Gastrocnemius medialis (tissue), 4 donors: ENCODE measurements at regions of chr1 and their contacts with region 1.

Region 1: GRCh38 chr1:109643385-109644230 is 12.3 kb upstream of the GSTM4 start:
- DNase-seq: peak; percentile 60 to 69
- ATAC-seq: peak; percentile 92 to 95
- H3K4me3 ChIP-seq: peak overlapping the region in 1 of 4 donors; percentile 14
- H3K27ac ChIP-seq: no peak overlapping the region
- H3K4me1 ChIP-seq: peaks cover 0 to 6% of the 10 kb centered on the region in 2 donors
- H3K27me3 ChIP-seq: no peaks in the 10 kb centered on the region
- CTCF ChIP-seq: peak; percentile 73 to 92 (median 85)
- POLR2A ChIP-seq: no peak

Region 2: DNA sequence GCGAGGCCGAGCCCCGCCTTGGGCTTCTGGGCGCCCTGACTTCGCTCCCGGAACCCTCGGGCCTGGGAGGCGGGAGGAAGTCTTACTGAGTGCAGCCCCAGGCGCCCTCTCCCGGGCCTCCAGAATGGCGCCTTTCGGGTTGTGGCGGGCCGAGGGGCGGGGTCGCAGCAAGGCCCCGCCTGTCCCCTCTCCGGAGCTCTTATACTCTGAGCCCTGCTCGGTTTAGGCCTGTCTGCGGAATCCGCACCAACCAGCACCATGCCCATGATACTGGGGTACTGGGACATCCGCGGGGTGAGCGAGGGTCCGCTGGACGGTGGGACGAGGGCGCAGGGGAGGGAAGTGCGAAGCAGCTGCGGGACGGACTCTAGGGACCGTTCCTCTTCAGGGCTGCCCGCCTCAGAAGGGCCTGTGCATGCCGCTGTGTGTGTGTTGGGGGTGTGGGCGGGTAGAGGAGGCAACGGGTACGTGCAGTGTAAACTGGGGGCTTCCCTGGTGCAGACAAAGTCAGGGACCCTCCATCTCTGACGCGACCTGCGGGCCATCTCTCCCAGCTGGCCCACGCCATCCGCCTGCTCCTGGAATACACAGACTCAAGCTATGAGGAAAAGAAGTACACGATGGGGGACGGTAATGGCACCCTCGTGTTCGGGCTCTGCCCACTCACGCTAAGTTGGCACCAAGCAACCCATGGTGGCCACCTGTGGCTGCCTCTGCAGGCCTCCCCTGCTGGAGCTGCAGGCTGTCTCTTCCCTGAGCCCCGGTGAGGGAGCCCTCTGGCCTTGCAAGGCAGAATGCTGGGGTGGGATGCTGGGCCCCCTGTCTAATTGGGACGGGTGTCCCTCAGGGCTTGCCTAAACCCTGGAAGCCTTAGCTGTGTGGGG is 44.2 kb after region 1 on chr1 and contains the start of gene GSTM1:
- in situ Hi-C with region 1: no loop called
- intact Hi-C with region 1: loop called (anchors 2 kb)
- DNase-seq: no peak
- ATAC-seq: no peak
- H3K4me3 ChIP-seq: peak within 1 kb of the TSS in 1 of 4 donors; percentile 54
- H3K27ac ChIP-seq: peak within 1 kb of the TSS in 1 of 4 donors; percentile 84
- H3K4me1 ChIP-seq: peaks cover 0 to 6% of the 10 kb centered on the region in 2 donors
- H3K27me3 ChIP-seq: no peaks in the 10 kb centered on the region
- CTCF ChIP-seq: peak in 1 of 5 experiments; percentile 75
- POLR2A ChIP-seq: peak in 1 of 2 donors; percentile 22
- total RNA-seq, gene GSTM1: 30.3 TPM in 1 of 4 donors, not detected in the others

Region 3: GRCh38 chr1:109704173-109704572 is 60.6 kb after region 1 on chr1:
- in situ Hi-C with region 1: no loop called
- intact Hi-C with region 1: loop called (anchors 5 kb)
- DNase-seq: no peak
- ATAC-seq: no peak
- H3K4me3 ChIP-seq: no peak overlapping the region
- H3K27ac ChIP-seq: no peak overlapping the region
- H3K4me1 ChIP-seq: no peaks in the 10 kb centered on the region
- H3K27me3 ChIP-seq: no peaks in the 10 kb centered on the region
- CTCF ChIP-seq: peak in 1 of 5 experiments; percentile 37
- POLR2A ChIP-seq: no peak